Right ventricle myocardium superior (tissue), 1 donor: ENCODE measurements at regions of chr2 and their contacts with region 1.

Region 1: DNA sequence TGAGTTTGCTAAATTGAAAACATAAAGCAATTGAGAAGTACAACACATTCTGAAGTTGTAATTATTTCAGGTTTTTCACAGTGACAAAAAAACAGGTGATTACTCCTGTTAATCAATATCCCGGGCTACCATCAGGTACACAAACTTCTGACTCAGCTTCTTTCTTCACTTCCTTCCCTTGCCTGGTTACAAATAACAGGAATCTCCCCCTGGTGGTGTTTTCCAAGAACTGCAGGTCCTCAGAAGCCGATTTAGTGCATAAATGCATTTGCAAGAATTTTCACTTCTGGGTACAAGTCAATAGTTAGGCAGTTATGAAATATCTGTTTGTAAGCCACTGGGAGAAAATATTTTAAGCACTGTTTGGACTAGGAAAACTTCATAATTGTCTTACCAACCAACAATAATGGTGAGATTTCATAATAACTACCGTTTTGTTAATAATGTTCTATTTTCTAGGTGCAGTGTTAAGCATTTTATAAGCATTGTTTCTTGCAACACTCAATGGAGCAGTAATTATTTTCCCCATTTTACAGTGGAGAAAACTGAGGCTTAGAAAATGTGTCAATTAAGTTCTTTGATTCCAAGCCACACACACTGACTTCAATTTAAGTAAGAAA is 12.4 kb upstream of the GMCL1 start:
- DNase-seq: no peak
- ATAC-seq: peak; percentile 78

Region 2: GRCh38 chr2:69565431-69565839 is 251.6 kb before region 1 on chr2:
- intact Hi-C with region 1: loop called (anchors 10 kb)
- DNase-seq: peak; percentile 69
- ATAC-seq: peak; percentile 49

Region 3: GRCh38 chr2:69694894-69695849 is 121.9 kb before region 1 on chr2:
- intact Hi-C with region 1: no loop called
- DNase-seq: no peak
- ATAC-seq: no peak

Region 4: DNA sequence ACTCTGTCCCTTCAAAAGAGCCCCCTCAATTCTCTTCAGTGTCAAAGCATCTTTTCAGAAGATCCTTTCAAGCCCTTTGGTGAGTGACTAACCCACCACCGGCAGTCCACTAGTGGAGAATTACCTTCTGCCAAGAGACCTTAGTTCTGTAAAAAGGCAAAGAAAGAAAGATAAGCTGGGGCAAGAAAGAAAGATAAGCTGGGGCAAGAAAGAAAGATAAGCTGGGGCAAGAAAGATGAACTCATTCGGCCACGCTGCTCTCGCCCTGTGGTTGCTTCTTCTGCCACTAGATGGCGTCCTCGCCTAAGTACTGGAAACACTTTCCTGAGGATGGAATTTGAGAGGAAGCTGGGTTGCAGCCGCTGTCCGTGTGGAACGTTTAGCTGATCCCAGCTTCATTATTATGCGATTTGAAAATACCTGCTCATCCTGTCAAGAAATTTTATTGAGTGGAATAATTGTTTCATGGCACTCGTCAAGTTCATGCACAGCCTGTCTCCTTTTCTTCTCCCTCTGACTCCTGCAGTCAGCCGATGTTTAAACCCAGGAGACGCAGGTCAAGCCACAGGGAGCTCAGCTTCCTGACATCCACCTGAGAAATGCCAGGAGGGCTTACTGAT is 92.4 kb before region 1 on chr2:
- intact Hi-C with region 1: loop called (anchors 2 kb)
- DNase-seq: peak; percentile 90
- ATAC-seq: peak; percentile 96